Esophagus muscularis mucosa (tissue), 4 donors: ENCODE measurements at regions of chr17 and their contacts with region 1.

Region 1: DNA sequence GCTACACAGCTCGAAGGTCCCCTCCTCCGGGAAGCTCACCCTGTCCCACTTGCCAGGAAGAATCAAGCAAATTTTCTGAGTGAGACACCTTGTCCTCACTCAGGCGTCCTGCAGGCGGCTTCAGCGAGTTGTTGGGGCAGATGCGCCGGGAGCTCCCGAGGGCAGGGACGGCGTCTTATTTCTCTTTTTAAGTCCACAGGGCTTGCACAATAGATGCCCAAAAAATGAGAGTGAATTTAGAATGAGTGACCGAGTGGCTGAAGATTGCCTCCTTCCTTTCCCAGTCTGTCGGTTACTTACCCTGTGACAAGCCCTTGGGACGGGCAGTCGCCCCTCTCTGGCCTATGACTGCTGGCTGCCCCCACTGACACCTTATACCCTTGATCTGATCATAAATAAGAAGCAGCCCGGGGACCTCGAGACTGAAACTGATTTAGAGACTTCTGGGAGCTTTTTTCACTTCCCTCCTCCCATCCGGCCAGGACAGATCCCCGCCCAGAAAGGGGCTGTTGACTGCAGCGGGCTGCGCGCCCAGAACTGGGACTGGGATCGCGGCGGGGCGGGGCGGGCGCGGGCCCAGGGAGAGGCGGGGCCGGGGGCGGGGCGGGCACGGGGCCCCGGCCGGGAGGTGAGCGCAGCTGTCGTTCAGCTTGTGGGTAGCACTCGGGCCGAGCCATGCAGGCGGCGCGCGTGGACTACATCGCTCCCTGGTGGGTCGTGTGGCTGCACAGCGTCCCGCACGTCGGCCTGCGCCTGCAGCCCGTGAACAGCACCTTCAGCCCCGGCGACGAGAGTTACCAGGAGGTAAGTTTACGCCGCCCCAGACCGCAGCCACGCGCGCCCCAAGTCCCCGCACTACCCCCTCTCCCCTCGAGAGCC is at the start of gene TTYH2:
- DNase-seq: peak; percentile 96
- H3K4me3 ChIP-seq: peak within 1 kb of the TSS; percentile 60 to 73 (median 62)
- H3K27ac ChIP-seq: peak within 1 kb of the TSS; percentile 77 to 86 (median 82)
- H3K4me1 ChIP-seq: peaks cover 41 to 78% (median 56%) of the 10 kb centered on the region in 4 donors
- H3K27me3 ChIP-seq: no peaks in the 10 kb centered on the region
- CTCF ChIP-seq: peak; percentile 25 to 34 (median 29)
- EP300 ChIP-seq: no peak
- POLR2A ChIP-seq: no peak
- total RNA-seq, gene TTYH2: 5.8 to 11.3 (median 7.9) TPM

Region 2: GRCh38 chr17:74249590-74250270 is 36.6 kb after region 1 on chr17:
- intact Hi-C with region 1: no loop called
- DNase-seq: no peak
- H3K4me3 ChIP-seq: no peak overlapping the region
- H3K27ac ChIP-seq: no peak overlapping the region
- H3K4me1 ChIP-seq: peaks cover 0 to 10% (median 4%) of the 10 kb centered on the region in 4 donors
- H3K27me3 ChIP-seq: no peaks in the 10 kb centered on the region
- CTCF ChIP-seq: no peak
- EP300 ChIP-seq: no peak
- POLR2A ChIP-seq: no peak

Region 3: GRCh38 chr17:74361230-74362068 is 148.3 kb after region 1 on chr17 and contains the start of gene BTBD17:
- intact Hi-C with region 1: loop called (anchors 5 kb)
- DNase-seq: no peak
- H3K4me3 ChIP-seq: no peak within 1 kb of the TSS
- H3K27ac ChIP-seq: no peak within 1 kb of the TSS
- H3K4me1 ChIP-seq: peaks cover 0 to 28% (median 22%) of the 10 kb centered on the region in 4 donors
- H3K27me3 ChIP-seq: peaks cover 0 to 72% (median 42%) of the 10 kb centered on the region in 4 donors
- CTCF ChIP-seq: peak; percentile 62 to 72 (median 63)
- EP300 ChIP-seq: no peak
- POLR2A ChIP-seq: no peak
- total RNA-seq, gene BTBD17: 0.17 TPM in 1 of 4 donors, not detected in the others